Activated B cell treated with CpG ODN at 0.5 μM for 24 hours (primary cell): ENCODE measurements at regions of chr9 and their contacts with region 1.

Region 1: DNA sequence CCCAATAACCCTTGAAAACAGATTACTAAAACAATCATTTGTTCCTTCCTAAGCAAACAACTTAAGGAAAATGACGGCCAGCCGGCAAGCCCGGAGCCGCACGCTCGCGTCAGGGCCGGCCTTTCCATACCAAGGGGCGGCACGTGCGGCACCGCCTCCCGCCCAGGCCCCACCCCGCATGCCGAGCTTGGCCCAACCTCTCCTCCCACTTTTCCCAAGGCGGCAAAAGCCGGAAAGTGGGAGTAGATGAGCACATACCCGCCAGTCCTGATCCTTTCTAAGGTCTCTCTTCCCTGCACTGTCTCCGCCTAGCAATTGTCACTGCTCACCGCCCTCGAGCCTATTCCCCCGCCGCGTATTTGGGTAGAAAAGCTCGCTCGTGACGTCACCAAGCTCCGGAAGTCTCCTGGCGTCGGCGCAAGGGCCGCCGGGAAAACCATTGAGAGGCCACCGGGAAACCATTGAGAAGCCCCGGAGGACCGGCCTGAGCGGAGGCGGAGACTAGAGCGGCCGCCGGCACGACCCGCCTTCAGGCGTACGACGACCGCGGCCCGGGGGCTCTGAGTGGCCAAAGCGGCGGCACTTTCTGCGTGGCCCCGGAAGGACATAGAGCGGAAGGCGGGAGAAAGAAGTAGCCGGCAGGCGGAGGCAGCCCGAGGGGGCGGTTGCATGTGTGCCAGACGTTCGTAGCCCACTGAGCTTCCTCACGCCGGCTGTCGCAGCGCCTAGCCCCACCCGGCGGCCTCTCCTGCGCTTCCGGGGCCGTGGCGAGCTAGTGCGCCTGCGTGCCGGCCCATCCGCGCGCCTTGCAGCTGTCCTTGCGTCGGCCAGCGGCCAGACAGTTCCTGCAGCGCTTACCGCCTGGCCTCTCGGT is at the starts of genes NCBP1 and TSTD2:
- DNase-seq: peak; percentile 93
- ATAC-seq: peak; percentile 92
- H3K4me3 Mint-ChIP-seq: peak within 1 kb of the TSS; percentile 100
- H3K27ac Mint-ChIP-seq: peak within 1 kb of the TSS; percentile 99
- H3K4me1 Mint-ChIP-seq: peaks cover 47% of the 10 kb centered on the region
- H3K27me3 Mint-ChIP-seq: no peaks in the 10 kb centered on the region
- CTCF ChIP-seq: no peak
- total RNA-seq, gene NCBP1: 31.3 and 36.3 TPM in 2 replicates
- total RNA-seq, gene TSTD2: 18.0 and 21.6 TPM in 2 replicates

Region 2: GRCh38 chr9:96654443-96655197 is 978.6 kb before region 1 on chr9:
- CTCF ChIA-PET with region 1: no interaction called
- POLR2A ChIA-PET with region 1: no interaction called
- intact Hi-C with region 1: loop called (anchors 10 kb)
- DNase-seq: peak; percentile 58
- ATAC-seq: peak; percentile 64
- H3K4me3 Mint-ChIP-seq: peak overlapping the region; percentile 88
- H3K27ac Mint-ChIP-seq: peak overlapping the region; percentile 86
- H3K4me1 Mint-ChIP-seq: peaks cover 17% of the 10 kb centered on the region
- H3K27me3 Mint-ChIP-seq: no peaks in the 10 kb centered on the region
- CTCF ChIP-seq: no peak

Region 3: DNA sequence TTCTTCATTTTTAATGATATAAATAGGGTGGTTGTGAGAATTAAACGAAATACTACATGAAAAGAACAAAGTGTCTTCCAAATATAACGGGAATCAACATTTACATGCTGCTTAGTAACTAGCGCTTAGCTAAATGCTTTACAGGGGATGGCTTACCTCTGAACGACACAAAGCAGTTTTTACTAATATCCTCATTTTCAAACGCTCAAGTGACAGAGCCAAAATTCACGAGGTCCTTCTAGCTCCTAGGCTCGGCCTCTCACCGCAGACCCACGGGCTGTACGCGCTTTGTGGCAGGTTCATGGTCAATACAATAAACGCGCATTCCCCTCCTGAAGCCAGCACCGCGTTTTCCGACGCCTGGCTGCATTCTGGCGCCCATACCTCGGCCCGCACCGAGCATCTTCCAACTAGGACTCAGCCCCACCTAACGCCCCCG is 855.8 kb before region 1 on chr9:
- CTCF ChIA-PET with region 1: no interaction called
- POLR2A ChIA-PET with region 1: interaction called, 3 read pairs
- intact Hi-C with region 1: loop called (anchors 10 kb)
- DNase-seq: no peak
- ATAC-seq: no peak
- H3K4me3 Mint-ChIP-seq: peak overlapping the region; percentile 99
- H3K27ac Mint-ChIP-seq: peak overlapping the region; percentile 96
- H3K4me1 Mint-ChIP-seq: peaks cover 25% of the 10 kb centered on the region
- H3K27me3 Mint-ChIP-seq: no peaks in the 10 kb centered on the region
- CTCF ChIP-seq: no peak

Region 4: DNA sequence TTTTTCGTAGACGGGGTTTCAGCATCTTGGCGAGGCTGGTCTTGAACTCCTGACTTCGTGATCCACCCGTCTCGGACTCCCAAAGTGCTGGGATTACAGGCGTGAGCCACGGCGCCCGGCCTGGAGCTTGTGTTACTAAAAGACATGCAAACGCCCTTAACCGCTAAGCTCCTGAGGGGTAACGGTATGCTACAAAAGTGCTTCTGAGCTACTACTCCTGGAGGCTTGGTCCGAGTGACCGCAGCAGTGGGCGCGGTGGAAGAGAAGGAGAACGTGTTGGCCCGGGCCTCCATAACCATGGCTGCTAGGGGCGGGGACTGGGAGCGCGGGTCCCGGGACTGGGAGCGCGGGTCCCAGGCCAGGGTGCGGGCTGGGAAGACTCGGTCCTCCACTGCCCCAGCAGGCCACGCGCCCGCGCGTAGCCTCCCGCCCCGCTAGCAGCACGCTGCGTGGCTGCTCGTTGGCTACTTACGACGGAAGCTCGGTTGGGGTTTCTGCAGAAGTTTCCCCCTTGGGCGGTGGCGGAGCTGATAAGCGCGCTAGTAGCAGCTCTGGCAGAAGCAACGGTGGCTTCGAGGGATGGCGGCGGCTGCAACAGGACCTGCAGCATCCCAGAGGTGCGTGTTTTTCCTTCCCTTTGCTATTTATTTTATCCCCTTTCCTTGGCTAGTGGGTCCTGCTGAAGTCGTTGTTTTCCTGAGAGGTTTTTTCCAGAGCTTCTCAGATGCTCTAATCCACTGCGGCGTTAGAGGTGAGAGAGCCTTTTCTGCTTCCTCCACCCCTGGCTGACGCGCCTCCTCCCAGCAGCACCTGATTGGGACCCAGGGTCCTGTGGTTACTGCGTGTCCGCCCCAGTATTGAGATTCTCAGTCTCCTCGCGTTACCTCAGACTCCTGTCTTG is 395.0 kb before region 1 on chr9:
- CTCF ChIA-PET with region 1: no interaction called
- POLR2A ChIA-PET with region 1: interaction called, 10 read pairs
- intact Hi-C with region 1: no loop called
- DNase-seq: peak; percentile 62
- ATAC-seq: peak; percentile 92
- H3K4me3 Mint-ChIP-seq: peak overlapping the region; percentile 95
- H3K27ac Mint-ChIP-seq: peak overlapping the region; percentile 90
- H3K4me1 Mint-ChIP-seq: peaks cover 18% of the 10 kb centered on the region
- H3K27me3 Mint-ChIP-seq: peaks cover 2% of the 10 kb centered on the region
- CTCF ChIP-seq: no peak

Region 5: GRCh38 chr9:97615439-97616072 is 17.7 kb before region 1 on chr9:
- CTCF ChIA-PET with region 1: interaction called, 14 read pairs
- POLR2A ChIA-PET with region 1: interaction called, 9 read pairs
- intact Hi-C with region 1: loop called (anchors 1 kb)
- DNase-seq: no peak
- ATAC-seq: peak; percentile 52
- H3K4me3 Mint-ChIP-seq: no peak overlapping the region
- H3K27ac Mint-ChIP-seq: no peak overlapping the region
- H3K4me1 Mint-ChIP-seq: peaks cover 12% of the 10 kb centered on the region
- H3K27me3 Mint-ChIP-seq: no peaks in the 10 kb centered on the region
- CTCF ChIP-seq: peak; percentile 77

Region 6: GRCh38 chr9:97982683-97983588 is 349.7 kb after region 1 on chr9 and contains the start of gene ANP32B:
- CTCF ChIA-PET with region 1: no interaction called
- POLR2A ChIA-PET with region 1: interaction called, 16 read pairs
- intact Hi-C with region 1: loop called (anchors 1 kb)
- DNase-seq: peak; percentile 95
- ATAC-seq: peak; percentile 80
- H3K4me3 Mint-ChIP-seq: peak within 1 kb of the TSS; percentile 86
- H3K27ac Mint-ChIP-seq: peak within 1 kb of the TSS; percentile 92
- H3K4me1 Mint-ChIP-seq: peaks cover 38% of the 10 kb centered on the region
- H3K27me3 Mint-ChIP-seq: no peaks in the 10 kb centered on the region
- CTCF ChIP-seq: no peak
- total RNA-seq, gene ANP32B: 162 and 173 TPM in 2 replicates

Region 7: GRCh38 chr9:98255578-98256296 is 622.5 kb after region 1 on chr9 and contains the start of gene TBC1D2:
- CTCF ChIA-PET with region 1: interaction called, 3 read pairs
- POLR2A ChIA-PET with region 1: interaction called, 8 read pairs
- intact Hi-C with region 1: loop called (anchors 1 kb)
- DNase-seq: peak; percentile 98
- ATAC-seq: peak; percentile 90
- H3K4me3 Mint-ChIP-seq: peak within 1 kb of the TSS; percentile 98
- H3K27ac Mint-ChIP-seq: peak within 1 kb of the TSS; percentile 99
- H3K4me1 Mint-ChIP-seq: peaks cover 13% of the 10 kb centered on the region
- H3K27me3 Mint-ChIP-seq: no peaks in the 10 kb centered on the region
- CTCF ChIP-seq: no peak
- total RNA-seq, gene TBC1D2: 2.1 and 2.7 TPM in 2 replicates